ENCODE measurements at regions of chr17 and their contacts with region 1.

Region 1: DNA sequence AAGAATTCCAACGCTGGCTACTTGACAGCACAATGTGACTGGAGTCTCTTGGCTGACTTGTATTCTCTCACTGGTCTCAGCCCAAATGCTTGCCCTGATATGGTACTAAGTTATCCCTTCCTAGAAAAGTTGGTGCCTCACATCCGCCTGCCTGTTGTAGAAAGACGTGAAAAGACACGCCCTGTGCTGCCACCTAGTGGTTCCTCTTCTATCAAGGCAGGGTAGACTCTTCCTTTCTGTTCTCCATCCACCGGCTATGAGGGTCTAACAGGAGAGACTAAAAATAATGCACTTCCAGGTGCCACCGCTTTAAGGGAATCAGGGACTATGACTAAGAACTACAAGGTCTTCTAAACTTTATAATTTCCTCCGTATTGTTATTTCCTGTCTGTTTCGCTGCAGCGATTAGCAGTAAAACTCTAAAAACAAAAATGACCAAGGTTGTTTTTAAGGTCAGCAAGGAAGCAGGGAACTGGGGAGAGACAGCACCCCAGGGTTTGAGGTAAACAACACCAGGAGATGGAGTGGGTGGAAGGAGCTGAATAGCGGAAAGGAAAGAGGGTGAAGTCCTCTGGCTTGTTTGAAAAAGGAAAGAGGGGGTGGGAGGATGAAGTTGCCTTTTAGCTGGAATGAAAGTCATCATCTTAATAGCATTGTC is 109.5 kb downstream of the YPEL2 start:
- H3K4me3 Mint-ChIP-seq: peak overlapping the region; percentile 40
- H3K27ac Mint-ChIP-seq: peak overlapping the region; percentile 47
- H3K4me1 Mint-ChIP-seq: peaks cover 49% of the 10 kb centered on the region
- H3K27me3 Mint-ChIP-seq: no peaks in the 10 kb centered on the region

Region 2: DNA sequence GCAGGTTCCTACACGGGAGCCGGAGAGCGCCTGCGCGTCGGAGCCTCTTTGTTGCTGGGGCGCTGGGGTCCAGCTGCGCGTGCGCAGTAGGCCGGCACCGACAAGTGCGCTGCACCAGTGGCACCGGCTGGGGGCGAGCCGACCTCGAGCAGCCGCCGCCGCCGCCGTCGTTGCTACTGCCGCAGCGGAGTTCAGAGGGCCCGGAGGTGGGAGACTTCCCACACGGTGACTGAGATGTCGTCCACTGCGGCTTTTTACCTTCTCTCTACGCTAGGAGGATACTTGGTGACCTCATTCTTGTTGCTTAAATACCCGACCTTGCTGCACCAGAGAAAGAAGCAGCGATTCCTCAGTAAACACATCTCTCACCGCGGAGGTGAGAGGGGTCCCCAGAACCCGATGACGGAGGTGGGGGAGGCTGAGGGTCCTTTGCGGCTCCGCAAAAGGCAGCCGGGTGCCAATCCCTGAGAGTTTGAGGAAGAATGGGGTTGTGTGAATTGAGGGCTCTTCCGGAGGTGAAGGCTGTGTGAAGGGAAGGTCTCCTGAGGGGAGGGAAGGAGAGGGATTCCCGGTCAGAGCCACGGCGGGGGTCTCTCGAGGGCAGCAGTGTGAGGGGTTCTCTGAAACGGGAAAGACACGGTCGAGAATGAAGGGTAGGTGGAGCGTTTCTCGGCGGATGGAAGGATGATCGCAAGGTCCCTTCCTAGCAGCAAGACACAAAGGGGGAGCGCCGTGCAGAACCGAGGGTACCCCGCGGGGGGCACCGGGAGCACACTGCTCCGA is 220.3 kb before region 1 on chr17 and contains the start of gene GDPD1:
- intact Hi-C with region 1: loop called (anchors 2 kb)
- H3K4me3 Mint-ChIP-seq: peak within 1 kb of the TSS; percentile 97
- H3K27ac Mint-ChIP-seq: peak within 1 kb of the TSS; percentile 82
- H3K4me1 Mint-ChIP-seq: peaks cover 10% of the 10 kb centered on the region
- H3K27me3 Mint-ChIP-seq: peaks cover 3% of the 10 kb centered on the region

Region 3: DNA sequence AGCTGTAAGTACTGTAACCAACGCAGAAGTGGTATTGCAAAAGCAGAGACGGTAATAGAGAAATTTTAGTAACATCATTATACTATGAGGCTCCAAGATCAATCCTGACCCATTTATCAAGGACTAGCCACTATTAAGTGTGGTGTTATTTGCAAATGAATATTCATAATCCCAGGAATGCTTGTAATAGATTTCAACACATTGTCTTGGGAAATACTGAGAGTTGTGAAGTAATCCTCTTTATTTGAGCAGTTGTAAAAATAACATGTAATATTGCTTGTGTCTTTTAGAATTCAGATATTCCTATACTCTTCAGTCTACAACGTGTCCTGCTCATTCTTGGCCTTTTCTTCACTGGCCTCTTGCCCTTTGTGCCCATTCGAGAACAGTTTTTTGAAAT is 174.2 kb before region 1 on chr17:
- intact Hi-C with region 1: no loop called
- H3K4me3 Mint-ChIP-seq: no peak overlapping the region
- H3K27ac Mint-ChIP-seq: no peak overlapping the region
- H3K4me1 Mint-ChIP-seq: peaks cover 7% of the 10 kb centered on the region
- H3K27me3 Mint-ChIP-seq: no peaks in the 10 kb centered on the region

Region 4: GRCh38 chr17:59311130-59311920 is 129.6 kb before region 1 on chr17:
- intact Hi-C with region 1: loop called (anchors 1 kb)
- H3K4me3 Mint-ChIP-seq: no peak overlapping the region
- H3K27ac Mint-ChIP-seq: peak overlapping the region; percentile 30
- H3K4me1 Mint-ChIP-seq: peaks cover 15% of the 10 kb centered on the region
- H3K27me3 Mint-ChIP-seq: no peaks in the 10 kb centered on the region

Region 5: GRCh38 chr17:59331129-59331928 is 109.6 kb before region 1 on chr17 and contains the start of gene YPEL2:
- intact Hi-C with region 1: loop called (anchors 2 kb)
- H3K4me3 Mint-ChIP-seq: peak within 1 kb of the TSS; percentile 91
- H3K27ac Mint-ChIP-seq: peak within 1 kb of the TSS; percentile 88
- H3K4me1 Mint-ChIP-seq: peaks cover 64% of the 10 kb centered on the region
- H3K27me3 Mint-ChIP-seq: no peaks in the 10 kb centered on the region

Region 6: GRCh38 chr17:59415397-59415796 is 25.5 kb before region 1 on chr17:
- intact Hi-C with region 1: no loop called
- H3K4me3 Mint-ChIP-seq: no peak overlapping the region
- H3K27ac Mint-ChIP-seq: no peak overlapping the region
- H3K4me1 Mint-ChIP-seq: peaks cover 15% of the 10 kb centered on the region
- H3K27me3 Mint-ChIP-seq: no peaks in the 10 kb centered on the region

Region 7: DNA sequence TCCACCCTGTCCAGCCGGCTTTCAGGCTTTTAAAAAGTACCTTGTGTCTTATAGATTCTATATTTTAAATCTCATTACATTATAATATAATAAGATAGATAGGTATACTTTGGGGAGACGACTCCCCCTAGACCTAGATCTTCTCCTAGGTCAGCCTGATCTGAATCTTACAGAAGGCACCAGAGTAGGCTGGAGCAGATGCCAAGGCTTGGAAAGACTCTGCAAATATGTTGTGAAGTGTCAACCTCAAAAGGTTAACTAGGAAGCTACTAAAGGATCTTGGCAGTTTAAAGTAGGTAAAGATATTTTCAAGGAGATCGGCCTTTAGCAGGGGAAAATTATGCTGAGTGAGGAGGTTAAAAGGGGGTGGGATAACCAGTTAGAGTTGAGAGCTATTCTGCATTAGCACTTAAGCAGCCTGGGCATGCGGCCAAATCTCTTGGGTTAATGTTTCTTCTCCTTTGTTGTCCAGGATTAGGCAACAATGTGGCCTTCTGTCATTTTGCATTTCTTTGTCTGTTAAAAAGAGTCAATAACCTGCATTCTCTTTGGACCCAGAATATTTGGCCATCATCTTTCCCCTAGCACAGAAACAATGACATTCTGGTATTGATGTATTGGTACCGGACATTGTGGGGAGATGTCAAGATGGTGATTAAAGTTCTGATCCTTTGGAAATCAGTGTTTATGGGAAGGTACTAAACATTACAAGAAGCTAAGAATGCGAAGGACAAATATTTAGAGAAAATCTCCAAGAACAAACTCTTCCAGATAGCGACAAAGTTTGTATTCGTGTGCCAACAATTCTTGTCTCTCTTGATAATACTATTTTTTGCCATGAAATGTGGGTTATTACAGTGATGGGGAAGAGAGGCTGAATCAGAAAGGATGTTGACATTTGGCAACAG is 73.3 kb after region 1 on chr17:
- intact Hi-C with region 1: no loop called
- H3K4me3 Mint-ChIP-seq: no peak overlapping the region
- H3K27ac Mint-ChIP-seq: peak overlapping the region; percentile 70
- H3K4me1 Mint-ChIP-seq: peaks cover 38% of the 10 kb centered on the region
- H3K27me3 Mint-ChIP-seq: no peaks in the 10 kb centered on the region

Measured in dendritic cell treated with granulocyte-macrophage colony-stimulating factor and Interleukin-4, amounts not matched to agents 40 ng/mL and 50 ng/mL, for 4 days (primary cell).